Activated CD4-positive, alpha-beta T cell treated with anti-CD3 and anti-CD28 coated beads, Interleukin-2, amount 10 ng/mL, durations not matched to agents 24 days and 14 days (primary cell): ENCODE measurements at regions of chr20 and their contacts with region 1.

Region 1: DNA sequence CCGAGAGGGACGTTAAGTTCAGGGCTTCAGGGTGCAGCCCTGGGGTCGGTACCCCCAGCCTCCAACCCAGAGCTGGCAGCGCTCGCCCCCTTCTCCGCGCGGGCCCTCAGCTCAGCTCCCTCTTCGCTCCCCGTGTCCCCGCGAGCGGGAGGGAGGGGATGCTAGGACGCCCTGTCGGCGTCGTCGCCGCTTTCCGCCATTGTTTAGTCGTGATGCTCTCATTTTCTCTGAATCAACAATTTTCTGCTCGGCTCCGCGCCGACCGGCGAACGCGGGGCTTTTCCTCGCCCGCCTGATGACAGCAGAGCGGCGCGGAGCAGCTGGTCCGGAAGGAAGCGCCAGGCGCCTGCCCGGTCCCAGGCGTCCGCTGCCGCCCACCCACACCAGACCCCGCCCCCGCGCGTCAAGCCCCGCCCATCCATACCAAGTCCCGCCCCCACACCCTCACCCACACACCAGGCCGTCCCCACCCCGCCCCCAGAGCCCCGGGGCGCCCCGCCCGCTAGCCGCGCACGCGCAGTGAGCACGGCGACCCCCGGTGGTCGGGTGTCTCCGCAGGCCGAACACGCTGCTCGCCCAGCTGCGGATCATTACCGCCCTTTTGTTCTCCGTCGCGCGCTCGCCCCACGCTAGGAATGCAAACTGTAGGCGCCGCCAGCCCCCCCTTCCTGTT is 50.1 kb upstream of the SLC32A1 start:
- DNase-seq: peak; percentile 84
- H3K4me3 Mint-ChIP-seq: peak overlapping the region; percentile 87
- H3K27ac Mint-ChIP-seq: peak overlapping the region; percentile 56
- H3K4me1 Mint-ChIP-seq: peaks cover 5% of the 10 kb centered on the region
- H3K27me3 Mint-ChIP-seq: peaks cover 41% of the 10 kb centered on the region

Region 2: DNA sequence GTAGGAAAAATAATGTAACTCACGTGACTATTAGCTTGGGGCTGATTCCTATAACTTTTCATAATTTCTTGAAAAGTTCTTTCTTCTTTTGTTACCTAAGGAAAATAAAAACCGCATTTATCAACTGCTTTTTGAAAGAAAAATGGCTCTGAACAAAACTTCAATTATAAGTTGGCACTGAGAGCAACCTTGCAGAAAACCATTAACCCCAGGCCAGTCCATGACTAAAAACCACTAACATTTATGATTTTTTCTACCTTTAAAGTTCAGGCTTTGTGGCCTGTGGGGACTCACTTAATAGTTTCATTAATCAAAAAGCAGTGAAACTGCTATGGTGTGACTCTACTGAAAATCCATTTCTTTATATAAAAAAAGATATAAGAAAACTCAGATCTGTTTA is 1653.6 kb before region 1 on chr20:
- intact Hi-C with region 1: no loop called
- DNase-seq: no peak
- H3K4me3 Mint-ChIP-seq: no peak overlapping the region
- H3K27ac Mint-ChIP-seq: no peak overlapping the region
- H3K4me1 Mint-ChIP-seq: peaks cover 26% of the 10 kb centered on the region
- H3K27me3 Mint-ChIP-seq: no peaks in the 10 kb centered on the region

Region 3: DNA sequence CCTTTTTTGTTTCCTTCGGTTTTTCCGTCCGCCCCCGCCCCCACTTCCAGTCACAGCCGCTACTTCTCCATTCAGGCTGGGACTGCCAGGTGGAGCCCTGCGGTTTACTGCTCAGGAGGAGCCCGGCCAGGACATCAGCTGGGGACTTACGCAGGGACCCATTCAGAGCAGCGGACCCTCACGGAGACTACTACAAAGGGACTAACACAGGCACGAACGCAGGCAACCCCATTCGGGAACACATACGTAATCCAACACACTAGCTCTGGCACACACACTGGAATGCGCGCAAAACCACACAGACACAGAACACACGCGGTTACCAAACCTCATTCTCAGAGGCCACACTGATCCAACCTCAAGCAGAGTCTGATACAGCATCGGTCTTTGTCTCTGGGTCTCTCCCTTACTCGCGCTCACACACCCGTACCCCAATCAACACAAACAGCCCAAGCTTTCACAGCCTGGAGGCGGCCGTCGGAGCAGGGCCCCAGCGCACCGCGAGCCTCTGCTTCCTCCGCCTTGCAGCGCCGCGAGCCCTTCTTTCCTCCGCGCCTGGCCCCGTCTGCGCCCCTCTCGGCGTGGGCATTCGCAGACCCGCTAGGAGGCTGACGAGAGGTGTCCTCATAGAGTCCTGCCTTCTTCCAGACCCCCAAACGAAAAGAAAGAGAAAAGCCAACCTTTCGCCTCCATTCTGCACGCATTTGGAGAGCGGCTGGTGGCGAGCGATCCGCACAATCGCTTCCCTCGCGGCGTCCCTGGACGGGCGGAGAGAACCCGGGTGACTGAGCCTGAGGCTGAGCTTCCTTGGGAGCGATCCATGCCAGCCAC is 49.0 kb after region 1 on chr20:
- intact Hi-C with region 1: loop called (anchors 2 kb)
- DNase-seq: peak; percentile 64
- H3K4me3 Mint-ChIP-seq: no peak overlapping the region
- H3K27ac Mint-ChIP-seq: peak overlapping the region; percentile 58
- H3K4me1 Mint-ChIP-seq: peaks cover 35% of the 10 kb centered on the region
- H3K27me3 Mint-ChIP-seq: peaks cover 86% of the 10 kb centered on the region